IMR-90 (cell line): ENCODE measurements at regions of chr17 and their contacts with region 1.

Region 1: DNA sequence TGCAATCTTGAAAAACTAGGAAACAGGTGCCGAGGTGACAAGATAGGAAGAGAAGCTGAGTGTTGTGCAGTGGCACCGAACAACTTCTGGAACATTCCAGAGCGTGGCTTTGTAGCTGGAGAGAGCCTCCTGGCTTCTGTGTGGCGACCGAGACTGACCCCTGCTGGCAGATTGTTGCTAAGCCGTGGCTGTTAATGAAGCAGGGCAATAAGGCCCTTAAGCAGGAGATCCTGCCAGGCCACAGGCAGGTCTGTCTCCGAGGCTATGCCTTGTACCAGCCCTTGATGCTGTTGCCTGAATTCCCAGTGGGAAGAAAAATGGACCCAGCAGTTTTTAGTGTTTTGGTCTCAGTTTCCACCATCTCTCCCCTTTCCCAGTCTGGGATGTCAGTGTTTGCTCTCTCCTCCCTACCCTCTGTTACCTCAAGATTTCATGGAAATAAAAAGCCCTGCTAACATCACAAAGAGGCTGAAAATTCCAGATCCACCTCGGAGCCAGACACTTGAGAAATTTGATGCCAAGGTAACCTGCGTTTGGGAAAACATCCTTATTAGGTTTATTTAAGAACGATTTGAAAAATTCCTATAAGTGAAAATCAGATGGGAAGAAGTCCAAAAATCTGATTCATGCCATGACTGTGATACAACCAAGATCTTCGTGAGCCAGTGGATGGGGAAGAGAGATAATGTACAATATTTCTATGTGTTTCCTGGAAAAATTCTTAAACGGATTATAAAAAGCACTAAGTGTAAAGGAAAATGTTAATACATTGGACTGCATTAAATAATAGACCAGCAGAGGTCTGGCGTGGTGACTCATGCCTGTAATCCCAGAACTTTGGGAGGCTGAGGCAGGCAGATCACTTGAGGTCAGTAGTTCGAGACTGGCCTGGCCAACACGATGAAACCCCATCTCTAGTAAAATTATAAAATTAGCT is 265.1 kb downstream of the PRKCA start:
- DNase-seq: peak; percentile 88
- ATAC-seq: peak; percentile 86
- H3K4me3 ChIP-seq: no peak overlapping the region
- H3K27ac ChIP-seq: peak overlapping the region; percentile 93
- H3K4me1 ChIP-seq: peaks cover 22% of the 10 kb centered on the region
- H3K27me3 ChIP-seq: no peaks in the 10 kb centered on the region
- CTCF ChIP-seq: peak; percentile 89
- POLR2A ChIP-seq: no peak
- RAD21 ChIP-seq: peak; percentile 92

Region 2: GRCh38 chr17:66200685-66201092 is 366.8 kb before region 1 on chr17:
- CTCF ChIA-PET with region 1: interaction called, 3 read pairs
- POLR2A ChIA-PET with region 1: no interaction called
- dilution Hi-C with region 1: no loop called
- in situ Hi-C with region 1: no loop called
- intact Hi-C with region 1: loop called (anchors 5 kb)
- DNase-seq: peak; percentile 83
- ATAC-seq: peak; percentile 77
- H3K4me3 ChIP-seq: no peak overlapping the region
- H3K27ac ChIP-seq: no peak overlapping the region
- H3K4me1 ChIP-seq: no peaks in the 10 kb centered on the region
- H3K27me3 ChIP-seq: no peaks in the 10 kb centered on the region
- CTCF ChIP-seq: peak; percentile 80
- POLR2A ChIP-seq: no peak
- RAD21 ChIP-seq: peak; percentile 85

Region 3: GRCh38 chr17:67035131-67036083 is 467.9 kb after region 1 on chr17:
- CTCF ChIA-PET with region 1: no interaction called
- POLR2A ChIA-PET with region 1: no interaction called
- dilution Hi-C with region 1: no loop called
- in situ Hi-C with region 1: no loop called
- intact Hi-C with region 1: no loop called
- DNase-seq: no peak
- ATAC-seq: no peak
- H3K4me3 ChIP-seq: no peak overlapping the region
- H3K27ac ChIP-seq: no peak overlapping the region
- H3K4me1 ChIP-seq: no peaks in the 10 kb centered on the region
- H3K27me3 ChIP-seq: peaks cover 35% of the 10 kb centered on the region
- CTCF ChIP-seq: no peak
- POLR2A ChIP-seq: no peak
- RAD21 ChIP-seq: no peak